AG04450 (cell line): ENCODE measurements at regions of chr14 and their contacts with region 1.

Region 1: DNA sequence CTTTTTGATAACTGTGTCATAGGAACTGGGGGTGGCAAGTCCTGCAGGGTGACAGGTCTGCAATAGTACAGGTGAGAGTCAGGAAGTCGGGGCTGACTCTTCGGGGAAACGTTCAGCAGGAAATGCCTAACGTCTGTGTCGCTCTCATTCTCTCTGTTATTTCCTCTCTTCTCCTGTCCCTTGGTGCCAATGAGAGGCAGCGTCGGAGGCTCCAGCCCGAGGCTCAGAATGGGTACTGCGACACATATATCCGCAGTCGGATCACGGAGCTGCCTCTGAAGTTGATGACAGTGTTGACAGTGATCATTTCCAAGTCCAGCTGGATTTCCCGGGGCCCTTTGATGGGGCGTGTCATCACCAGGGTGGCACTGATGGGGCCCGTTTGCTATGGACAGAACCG is 2.7 kb upstream of the TC2N start:
- DNase-seq: no peak
- H3K4me3 ChIP-seq: no peak overlapping the region
- H3K27ac ChIP-seq: no peak overlapping the region
- H3K27me3 ChIP-seq: no peaks in the 10 kb centered on the region
- CTCF ChIP-seq: no peak

Region 2: DNA sequence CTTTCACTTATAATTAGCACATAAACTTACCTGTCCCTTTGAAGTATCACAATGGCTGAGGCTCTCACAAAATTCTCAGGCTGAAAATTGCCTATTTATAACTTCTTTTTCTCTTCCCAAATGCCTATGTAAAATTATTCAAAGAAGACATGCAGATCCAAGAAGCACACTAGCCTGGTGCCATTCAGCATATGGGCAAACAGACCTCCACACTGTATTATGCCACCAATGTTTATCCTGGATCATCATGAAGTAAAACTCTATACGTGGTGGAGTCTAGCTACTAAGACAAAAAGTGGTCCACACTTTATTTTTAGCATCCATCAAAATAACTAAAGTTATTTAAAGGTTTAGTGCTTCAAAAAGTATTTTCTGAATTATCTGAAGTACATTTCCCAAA is 18.4 kb before region 1 on chr14:
- CTCF ChIA-PET with region 1: no interaction called
- POLR2A ChIA-PET with region 1: no interaction called
- DNase-seq: no peak
- H3K4me3 ChIP-seq: no peak overlapping the region
- H3K27ac ChIP-seq: no peak overlapping the region
- H3K27me3 ChIP-seq: peaks cover 4% of the 10 kb centered on the region
- CTCF ChIP-seq: no peak

Region 3: DNA sequence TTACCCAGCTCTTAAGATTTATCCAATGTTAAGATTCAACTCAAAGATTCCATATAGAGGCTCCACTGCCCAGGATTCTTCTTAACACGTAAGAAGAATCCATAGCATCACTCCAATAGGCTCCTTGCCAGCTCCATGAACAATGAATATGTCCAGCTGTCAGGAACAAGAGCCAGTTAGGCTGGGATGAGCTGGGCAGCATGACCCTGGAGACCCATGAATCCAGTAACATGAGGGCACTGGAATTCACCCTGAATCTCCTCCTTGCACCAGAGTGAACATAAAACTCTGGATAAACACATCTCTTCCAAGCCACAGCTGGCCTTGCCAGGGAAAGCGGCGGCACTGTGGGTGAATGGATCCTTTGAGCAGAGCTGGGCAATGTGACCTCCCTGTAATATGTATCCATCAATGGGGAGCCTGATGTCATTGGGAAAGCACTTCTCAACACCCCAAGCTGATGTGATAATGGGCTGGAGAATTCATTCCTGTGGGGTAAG is 21.8 kb after region 1 on chr14:
- CTCF ChIA-PET with region 1: no interaction called
- POLR2A ChIA-PET with region 1: interaction called, 10 read pairs
- DNase-seq: no peak
- H3K4me3 ChIP-seq: no peak overlapping the region
- H3K27ac ChIP-seq: no peak overlapping the region
- H3K27me3 ChIP-seq: no peaks in the 10 kb centered on the region
- CTCF ChIP-seq: no peak